Adrenal gland (tissue), 19 donors: ENCODE measurements at regions of chr2 and their contacts with region 1.

Region 1: DNA sequence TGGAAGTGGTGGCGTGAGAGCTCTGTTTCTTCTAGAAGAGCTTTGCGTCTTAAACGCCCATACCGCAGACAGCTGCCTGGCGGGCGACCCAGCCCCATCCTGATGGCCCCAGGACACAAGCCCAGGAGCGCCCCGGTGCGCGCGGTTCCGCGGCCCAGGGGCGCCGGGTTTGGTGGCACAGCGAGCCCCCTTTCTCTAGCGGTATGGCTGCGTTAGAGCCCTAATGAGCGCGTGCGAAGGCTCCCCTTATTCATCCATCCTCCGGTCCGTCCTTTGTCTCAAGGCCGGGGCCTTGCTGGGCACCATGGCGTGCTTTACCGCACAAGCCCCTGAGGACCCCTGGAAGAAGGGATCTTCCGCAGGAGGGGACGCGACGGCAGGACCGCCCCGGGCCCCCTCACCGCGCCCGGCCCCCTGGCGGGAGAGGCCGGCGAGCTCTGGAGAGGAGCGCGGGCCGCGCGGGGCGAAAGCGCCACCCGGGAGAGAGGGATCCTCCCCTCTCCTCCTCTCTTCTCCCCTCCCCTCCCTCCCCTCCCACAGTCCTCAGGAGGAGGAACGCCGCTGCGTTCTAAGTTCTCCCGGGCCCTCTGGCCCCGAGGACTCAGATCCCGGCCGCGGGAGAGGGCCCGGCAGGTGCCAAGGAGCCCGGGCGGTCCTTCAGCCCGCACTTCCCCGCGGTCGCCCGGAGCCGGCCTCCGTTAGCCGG is 626 bp upstream of the SLC1A4 start:
- DNase-seq: peak; percentile 73 to 87 (median 78)
- H3K4me3 ChIP-seq: peak overlapping the region in 3 of 4 donors; percentile 78 to 98 (median 97)
- H3K27ac ChIP-seq: peak overlapping the region; percentile 84 to 99 (median 96)
- H3K4me1 ChIP-seq: peaks cover 16 to 36% of the 10 kb centered on the region in 2 donors
- H3K27me3 ChIP-seq: no peaks in the 10 kb centered on the region
- CTCF ChIP-seq: peak in 5 of 6 experiments; percentile 40 to 62 (median 51)
- POLR2A ChIP-seq: peak in 1 of 2 donors; percentile 74

Region 2: GRCh38 chr2:65025453-65026123 is 37.0 kb after region 1 on chr2:
- intact Hi-C with region 1: loop called in 1 of 2 experiments (anchors 5 kb)
- DNase-seq: no peak
- H3K4me3 ChIP-seq: no peak overlapping the region
- H3K27ac ChIP-seq: peak overlapping the region in 1 of 5 donors; percentile 58
- H3K4me1 ChIP-seq: peaks cover 0 to 24% of the 10 kb centered on the region in 2 donors
- H3K27me3 ChIP-seq: no peaks in the 10 kb centered on the region
- CTCF ChIP-seq: no peak
- POLR2A ChIP-seq: no peak

Region 3: GRCh38 chr2:65264821-65265670 is 276.5 kb after region 1 on chr2:
- intact Hi-C with region 1: no loop called
- DNase-seq: peak in 6 of 7 donors; percentile 35 to 58 (median 40)
- H3K4me3 ChIP-seq: no peak overlapping the region
- H3K27ac ChIP-seq: no peak overlapping the region
- H3K4me1 ChIP-seq: peaks cover 0 to 8% of the 10 kb centered on the region in 2 donors
- H3K27me3 ChIP-seq: no peaks in the 10 kb centered on the region
- CTCF ChIP-seq: peak; percentile 63 to 84 (median 74)
- POLR2A ChIP-seq: no peak